Lower leg skin (tissue), 4 donors: ENCODE measurements at regions of chr14 and their contacts with region 1.

Region 1: GRCh38 chr14:67619446-67620216 is at the start of gene ARG2:
- DNase-seq: peak; percentile 95 to 99
- H3K4me3 ChIP-seq: peak within 1 kb of the TSS; percentile 58
- CTCF ChIP-seq: peak in 1 of 3 donors; percentile 40
- POLR2A ChIP-seq: no peak
- total RNA-seq, gene ARG2: 3.5 to 6.8 (median 5.2) TPM

Region 2: DNA sequence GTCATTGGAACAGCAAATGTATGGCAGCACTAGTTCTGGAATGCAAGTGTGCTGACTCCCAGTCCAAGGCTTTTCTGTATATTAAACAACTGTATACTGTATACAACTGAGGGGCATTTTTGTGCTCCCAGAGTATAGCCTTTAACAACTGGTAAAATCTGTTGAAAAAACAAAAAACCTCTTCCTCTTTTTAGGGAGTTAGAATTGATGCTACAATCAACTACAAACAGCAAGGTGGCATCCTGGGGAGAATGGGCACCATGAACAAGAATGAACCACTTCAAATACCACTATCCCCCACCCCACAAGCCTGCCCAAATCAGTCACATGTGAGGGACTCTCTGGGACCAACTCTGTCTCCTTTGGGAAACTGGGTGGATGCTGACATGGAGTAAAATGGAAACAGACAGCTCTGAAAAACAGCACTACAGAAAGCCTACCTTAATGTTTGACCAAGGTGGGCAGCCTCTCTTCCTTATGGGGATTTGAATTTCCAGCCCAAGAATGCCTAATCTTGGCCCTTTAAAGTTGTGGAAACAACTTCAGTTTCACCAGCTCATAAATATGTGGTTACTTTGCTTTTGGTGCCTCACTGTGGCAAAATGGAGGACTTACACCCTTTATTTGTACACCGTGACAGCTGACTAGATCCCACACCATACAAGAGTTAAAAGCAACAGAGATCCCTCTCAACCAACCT is 47.3 kb after region 1 on chr14:
- intact Hi-C with region 1: loop called (anchors 10 kb)
- DNase-seq: peak in 1 of 2 donors; percentile 19
- H3K4me3 ChIP-seq: no peak overlapping the region
- CTCF ChIP-seq: no peak
- POLR2A ChIP-seq: no peak